CD4-positive, alpha-beta memory T cell (primary cell): ENCODE measurements at regions of chr10 and their contacts with region 1.

Region 1: DNA sequence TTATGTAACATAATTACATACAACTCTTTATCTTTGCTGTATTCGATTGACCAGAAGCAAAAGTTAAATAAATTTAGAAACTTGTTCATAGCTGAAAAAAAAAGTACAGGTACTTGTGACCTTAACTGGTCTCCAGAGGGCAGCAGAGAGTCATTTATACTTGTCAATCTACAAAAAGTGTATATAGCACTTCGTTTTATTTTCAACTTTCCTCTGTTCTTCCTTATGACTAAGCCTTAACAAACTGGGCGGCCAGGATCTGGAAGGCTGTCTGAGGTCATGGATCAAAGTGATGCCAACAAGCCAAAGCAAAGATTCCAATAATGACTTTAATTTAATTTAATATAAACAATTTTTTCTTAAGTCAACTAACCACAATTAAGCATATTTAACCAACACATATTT is 29.8 kb downstream of the C10orf67 start:
- DNase-seq: peak; percentile 55 to 68 (median 63)
- H3K4me3 ChIP-seq: no peak overlapping the region
- H3K4me3 Mint-ChIP-seq: no peak overlapping the region
- H3K27ac ChIP-seq: no peak overlapping the region
- H3K27ac Mint-ChIP-seq: no peak overlapping the region
- H3K4me1 ChIP-seq: no peaks in the 10 kb centered on the region
- H3K4me1 Mint-ChIP-seq: no peaks in the 10 kb centered on the region
- H3K27me3 ChIP-seq: no peaks in the 10 kb centered on the region
- H3K27me3 Mint-ChIP-seq: peaks cover under 1 to 3% of the 10 kb centered on the region in 2 donors

Region 2: GRCh38 chr10:23293145-23293724 is 21.6 kb before region 1 on chr10:
- CTCF ChIA-PET with region 1: interaction called, 10 read pairs
- POLR2A ChIA-PET with region 1: no interaction called
- intact Hi-C with region 1: no loop called
- DNase-seq: peak in 4 of 5 donors; percentile 9 to 19 (median 12)
- H3K4me3 ChIP-seq: no peak overlapping the region
- H3K4me3 Mint-ChIP-seq: no peak overlapping the region
- H3K27ac ChIP-seq: no peak overlapping the region
- H3K27ac Mint-ChIP-seq: no peak overlapping the region
- H3K4me1 ChIP-seq: no peaks in the 10 kb centered on the region
- H3K4me1 Mint-ChIP-seq: peaks cover 0 to 3% (median 0%) of the 10 kb centered on the region in 4 donors
- H3K27me3 ChIP-seq: no peaks in the 10 kb centered on the region
- H3K27me3 Mint-ChIP-seq: peaks cover 8 to 19% of the 10 kb centered on the region in 2 donors

Region 3: DNA sequence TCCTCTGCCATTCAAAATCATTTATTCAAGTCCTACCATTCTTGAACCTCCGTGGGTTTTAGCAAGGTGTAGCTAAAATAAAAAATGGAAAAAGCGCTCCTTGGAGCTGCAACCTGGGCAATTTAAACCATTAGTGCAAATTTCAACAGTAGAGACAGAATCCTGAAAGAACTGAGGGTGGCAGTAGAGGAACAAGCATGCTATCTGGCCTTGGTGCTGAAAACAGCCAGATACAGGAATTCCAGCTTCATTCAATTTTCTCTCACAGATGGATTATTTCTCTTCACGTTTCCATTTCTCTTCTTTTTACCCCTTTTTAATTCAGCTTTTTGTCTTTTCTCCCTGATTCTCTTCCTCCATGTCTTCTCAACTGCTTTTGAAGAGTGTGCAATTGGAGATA is 201.7 kb after region 1 on chr10:
- CTCF ChIA-PET with region 1: interaction called, 39 read pairs
- POLR2A ChIA-PET with region 1: no interaction called
- intact Hi-C with region 1: no loop called
- DNase-seq: no peak
- H3K4me3 ChIP-seq: no peak overlapping the region
- H3K4me3 Mint-ChIP-seq: no peak overlapping the region
- H3K27ac ChIP-seq: no peak overlapping the region
- H3K27ac Mint-ChIP-seq: no peak overlapping the region
- H3K4me1 ChIP-seq: no peaks in the 10 kb centered on the region
- H3K4me1 Mint-ChIP-seq: no peaks in the 10 kb centered on the region
- H3K27me3 ChIP-seq: peaks cover 6% of the 10 kb centered on the region
- H3K27me3 Mint-ChIP-seq: peaks cover 10 to 25% of the 10 kb centered on the region in 2 donors

Region 4: DNA sequence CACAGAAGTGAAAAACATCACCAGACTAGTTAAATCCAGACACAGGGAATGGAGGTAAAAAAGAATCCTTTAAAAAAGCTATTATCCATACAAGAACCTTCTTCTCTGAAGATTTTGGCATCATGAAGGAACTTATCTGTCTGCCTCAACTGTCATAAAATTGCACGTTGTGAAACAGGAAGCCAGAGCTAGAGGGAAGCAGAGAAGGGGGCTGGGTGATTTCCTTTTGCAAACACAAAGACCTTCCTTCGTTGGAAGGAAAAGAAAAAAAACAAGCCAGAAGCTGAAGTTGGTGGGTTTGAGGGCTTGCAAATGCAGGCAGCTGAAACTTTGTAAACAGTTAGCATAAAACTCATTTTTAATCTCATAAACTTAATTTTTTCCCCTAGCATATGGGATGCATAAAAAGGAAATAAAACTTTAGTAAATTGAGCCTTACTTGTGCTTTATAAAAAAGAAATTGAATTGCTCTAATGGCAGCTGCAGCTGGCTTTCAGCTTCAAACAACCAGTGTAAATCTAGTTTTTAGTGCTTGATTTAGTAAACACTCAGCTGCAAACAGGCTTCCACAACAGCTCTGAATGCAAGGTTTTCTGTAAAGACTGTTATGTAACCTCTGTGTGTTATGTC is 225.7 kb after region 1 on chr10:
- CTCF ChIA-PET with region 1: interaction called, 14 read pairs
- POLR2A ChIA-PET with region 1: no interaction called
- intact Hi-C with region 1: no loop called
- DNase-seq: peak in 1 of 5 donors; percentile 7
- H3K4me3 ChIP-seq: no peak overlapping the region
- H3K4me3 Mint-ChIP-seq: peak overlapping the region in 7 of 8 donors; percentile 8 to 74 (median 38)
- H3K27ac ChIP-seq: no peak overlapping the region
- H3K27ac Mint-ChIP-seq: peak overlapping the region in 6 of 7 donors; percentile 5 to 76 (median 48)
- H3K4me1 ChIP-seq: peaks cover 23% of the 10 kb centered on the region
- H3K4me1 Mint-ChIP-seq: peaks cover 16 to 30% (median 23%) of the 10 kb centered on the region in 4 donors
- H3K27me3 ChIP-seq: no peaks in the 10 kb centered on the region
- H3K27me3 Mint-ChIP-seq: peaks cover 4 to 10% of the 10 kb centered on the region in 2 donors

Region 5: DNA sequence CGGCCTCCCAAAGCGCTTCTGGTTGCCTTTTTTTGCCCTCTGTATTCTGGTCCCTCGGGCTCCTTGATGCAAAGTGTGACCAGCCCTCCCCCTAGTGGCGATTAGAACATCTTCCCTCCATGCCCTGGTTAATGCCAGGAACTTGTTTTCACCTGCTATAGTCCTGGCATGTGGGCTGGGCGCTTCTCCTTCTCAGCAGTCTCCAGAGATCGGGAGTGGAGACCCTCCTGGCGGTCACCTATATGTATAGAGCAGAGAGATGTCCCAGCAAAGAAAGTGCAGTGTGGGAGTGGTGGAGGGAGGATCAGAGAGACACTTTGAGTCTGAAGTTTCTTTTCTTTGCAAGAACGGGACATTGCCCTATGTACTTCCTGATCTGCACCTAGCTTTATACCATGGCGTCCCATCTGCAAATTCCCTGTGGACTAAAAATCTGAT is 388.2 kb after region 1 on chr10:
- CTCF ChIA-PET with region 1: interaction called, 22 read pairs
- POLR2A ChIA-PET with region 1: no interaction called
- intact Hi-C with region 1: loop called (anchors 1 kb)
- DNase-seq: peak; percentile 42 to 49 (median 44)
- H3K4me3 ChIP-seq: no peak overlapping the region
- H3K4me3 Mint-ChIP-seq: peak overlapping the region in 2 of 8 donors; percentile 27 to 32
- H3K27ac ChIP-seq: no peak overlapping the region
- H3K27ac Mint-ChIP-seq: no peak overlapping the region
- H3K4me1 ChIP-seq: no peaks in the 10 kb centered on the region
- H3K4me1 Mint-ChIP-seq: peaks cover 0 to 2% (median 0%) of the 10 kb centered on the region in 4 donors
- H3K27me3 ChIP-seq: no peaks in the 10 kb centered on the region
- H3K27me3 Mint-ChIP-seq: peaks cover 15 to 17% of the 10 kb centered on the region in 2 donors

Region 6: GRCh38 chr10:24518981-24519597 is 1204.3 kb after region 1 on chr10:
- CTCF ChIA-PET with region 1: interaction called, 5 read pairs
- POLR2A ChIA-PET with region 1: no interaction called
- intact Hi-C with region 1: loop called (anchors 2 kb)
- DNase-seq: peak; percentile 12 to 42 (median 19)
- H3K4me3 ChIP-seq: no peak overlapping the region
- H3K4me3 Mint-ChIP-seq: peak overlapping the region in 7 of 8 donors; percentile 10 to 78 (median 51)
- H3K27ac ChIP-seq: no peak overlapping the region
- H3K27ac Mint-ChIP-seq: no peak overlapping the region
- H3K4me1 ChIP-seq: peaks cover 12% of the 10 kb centered on the region
- H3K4me1 Mint-ChIP-seq: peaks cover 8 to 15% (median 12%) of the 10 kb centered on the region in 4 donors
- H3K27me3 ChIP-seq: no peaks in the 10 kb centered on the region
- H3K27me3 Mint-ChIP-seq: no peaks in the 10 kb centered on the region